ENCODE measurements at regions of chr1 and their contacts with region 1.

Region 1: DNA sequence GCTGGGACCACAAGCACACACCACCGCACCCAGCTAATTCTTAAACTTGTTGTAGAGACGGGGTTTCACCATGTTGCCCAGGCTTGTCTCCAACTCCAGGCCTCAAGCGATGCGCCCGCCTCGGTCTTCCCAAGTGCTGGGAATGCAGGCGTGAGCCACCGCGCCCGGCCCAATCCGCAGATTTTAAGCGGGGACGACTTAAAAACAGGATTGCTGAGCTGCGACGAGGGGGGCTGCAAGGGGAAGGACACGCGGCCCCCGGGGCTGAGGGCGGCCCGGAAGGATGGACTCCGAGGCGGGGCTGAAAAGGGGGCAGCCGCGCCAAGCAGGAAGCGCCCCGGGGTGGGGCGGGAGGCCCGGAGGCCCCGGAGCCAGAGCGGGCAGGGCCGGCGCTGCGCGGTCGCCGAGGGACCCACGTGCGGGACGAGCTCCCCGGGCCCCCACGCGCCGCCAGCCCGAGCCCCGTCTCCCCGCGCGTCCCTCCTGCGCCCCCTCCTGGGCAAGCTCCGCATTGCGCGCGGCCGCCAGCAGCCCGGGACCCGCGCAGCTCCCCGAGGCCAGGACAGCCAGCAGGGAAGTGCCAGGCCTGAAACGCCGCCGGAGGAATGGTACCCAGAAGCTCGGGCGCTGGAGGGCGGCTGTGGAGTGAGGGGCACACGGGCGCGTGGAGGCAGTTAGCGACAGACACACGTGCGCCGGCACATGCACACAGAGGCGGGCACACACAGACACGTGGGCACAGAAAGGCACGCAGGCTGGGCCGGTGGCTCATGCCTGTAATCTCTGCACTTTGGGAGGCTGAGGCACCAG is 5.5 kb upstream of the PRKCZ start:
- DNase-seq: no peak
- H3K4me3 ChIP-seq: peak overlapping the region; percentile 38 to 57 (median 45)
- H3K27ac ChIP-seq: no peak overlapping the region
- H3K4me1 ChIP-seq: peaks cover 19 to 29% (median 27%) of the 10 kb centered on the region in 4 donors
- H3K27me3 ChIP-seq: peaks cover 0 to 92% (median 24%) of the 10 kb centered on the region in 4 donors
- CTCF ChIP-seq: peak in 2 of 3 experiments; percentile 88 to 91
- EP300 ChIP-seq: no peak
- POLR2A ChIP-seq: no peak

Region 2: DNA sequence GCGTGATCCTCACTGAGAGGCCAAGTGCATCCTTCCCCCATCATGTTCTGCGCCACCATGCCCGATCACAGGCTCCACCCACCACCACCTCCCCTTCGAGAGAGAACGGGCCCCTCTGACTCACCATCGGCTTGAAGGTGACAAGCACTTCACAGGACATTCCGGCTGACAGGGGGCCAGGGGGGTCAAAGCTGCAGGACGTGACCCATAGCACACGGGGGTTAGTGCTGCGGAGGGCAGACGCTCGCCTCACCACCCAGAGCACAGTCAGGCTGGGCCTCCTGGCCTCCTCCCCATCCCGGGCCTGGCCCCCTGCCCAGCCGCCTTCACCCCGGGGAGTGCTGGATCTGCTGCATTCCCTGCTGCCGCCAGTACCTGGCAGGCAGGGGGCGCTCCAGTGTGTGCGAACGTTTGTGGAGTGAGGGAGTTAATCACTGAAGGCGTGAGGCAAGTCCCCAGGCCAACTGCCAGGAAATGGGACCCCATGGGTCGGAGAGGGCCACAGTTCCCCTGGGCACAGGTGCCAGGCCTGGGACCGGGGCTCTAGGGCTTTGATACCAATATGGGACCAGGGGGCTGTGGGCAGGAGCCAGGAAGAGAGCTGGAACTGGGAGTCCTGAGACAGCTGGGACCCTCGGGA is 84.8 kb before region 1 on chr1:
- intact Hi-C with region 1: loop called (anchors 5 kb)
- DNase-seq: no peak
- H3K4me3 ChIP-seq: no peak overlapping the region
- H3K27ac ChIP-seq: no peak overlapping the region
- H3K4me1 ChIP-seq: peaks cover 0 to 15% (median 9%) of the 10 kb centered on the region in 4 donors
- H3K27me3 ChIP-seq: peaks cover 0 to 92% (median 15%) of the 10 kb centered on the region in 4 donors
- CTCF ChIP-seq: peak; percentile 48 to 66 (median 55)
- EP300 ChIP-seq: no peak
- POLR2A ChIP-seq: no peak